Aorta (tissue), 5 donors: ENCODE measurements at regions of chr4 and their contacts with region 1.

Region 1: GRCh38 chr4:143626134-143626911 is 74.2 kb downstream of the FREM3 start:
- DNase-seq: peak; percentile 86 to 89
- ATAC-seq: peak; percentile 92
- H3K4me3 ChIP-seq: no peak overlapping the region
- H3K27ac ChIP-seq: peak overlapping the region; percentile 82 to 85
- H3K4me1 ChIP-seq: peaks cover 0 to 3% of the 10 kb centered on the region in 2 donors
- H3K27me3 ChIP-seq: no peaks in the 10 kb centered on the region

Region 2: GRCh38 chr4:142585411-142585810 is 1040.9 kb before region 1 on chr4:
- intact Hi-C with region 1: no loop called
- DNase-seq: no peak
- ATAC-seq: no peak
- H3K4me3 ChIP-seq: no peak overlapping the region
- H3K27ac ChIP-seq: no peak overlapping the region
- H3K4me1 ChIP-seq: no peaks in the 10 kb centered on the region
- H3K27me3 ChIP-seq: no peaks in the 10 kb centered on the region

Region 3: DNA sequence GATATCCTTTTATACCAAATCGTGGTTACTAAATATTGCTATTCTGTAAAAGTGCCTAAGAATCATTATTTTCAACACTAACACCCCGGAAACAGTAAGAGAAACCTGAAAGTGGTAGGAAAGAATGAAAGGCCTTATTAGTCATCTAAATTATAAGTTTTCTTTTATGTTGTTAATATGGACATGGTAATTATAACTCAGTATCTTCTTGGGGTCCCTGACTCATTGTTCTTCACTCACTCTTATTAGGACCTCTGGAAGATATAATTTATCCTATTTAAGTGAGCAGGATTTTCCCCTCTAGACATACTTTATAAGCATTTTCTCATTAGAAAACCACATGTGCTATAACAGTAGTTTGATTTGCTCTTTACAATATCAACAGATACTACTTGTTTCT is 61.9 kb before region 1 on chr4:
- intact Hi-C with region 1: no loop called
- DNase-seq: no peak
- ATAC-seq: no peak
- H3K4me3 ChIP-seq: no peak overlapping the region
- H3K27ac ChIP-seq: no peak overlapping the region
- H3K4me1 ChIP-seq: peaks cover 0 to 2% of the 10 kb centered on the region in 2 donors
- H3K27me3 ChIP-seq: no peaks in the 10 kb centered on the region

Region 4: GRCh38 chr4:143667461-143667860 is 41.1 kb after region 1 on chr4:
- intact Hi-C with region 1: loop called (anchors 5 kb)
- DNase-seq: peak in 1 of 2 donors; percentile 59
- ATAC-seq: peak; percentile 90
- H3K4me3 ChIP-seq: no peak overlapping the region
- H3K27ac ChIP-seq: no peak overlapping the region
- H3K4me1 ChIP-seq: no peaks in the 10 kb centered on the region
- H3K27me3 ChIP-seq: no peaks in the 10 kb centered on the region